ENCODE measurements at regions of chr22 and their contacts with region 1.

Region 1: DNA sequence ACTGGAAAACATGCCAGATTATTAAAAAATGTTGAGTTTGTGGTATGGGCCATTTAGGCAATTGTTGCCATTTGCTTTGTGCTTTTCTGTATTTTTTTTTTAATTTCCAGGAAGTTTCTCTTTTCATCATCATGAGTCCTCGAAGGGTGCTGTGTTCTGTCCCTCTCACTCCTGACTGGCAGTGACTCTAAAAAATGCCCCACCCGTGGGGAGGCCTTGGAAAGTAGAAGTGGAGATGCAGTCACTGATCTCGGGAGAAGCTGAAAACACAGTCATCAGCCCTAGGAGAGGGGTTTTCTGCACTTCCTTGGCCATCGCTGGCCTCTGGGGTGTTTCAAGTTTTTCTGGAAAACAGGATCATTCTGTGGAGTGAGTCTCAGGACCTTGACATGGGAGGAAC is 98.5 kb upstream of the GRK3 start:
- DNase-seq: no peak
- H3K4me3 ChIP-seq: no peak overlapping the region
- H3K4me3 Mint-ChIP-seq: no peak overlapping the region
- H3K27ac Mint-ChIP-seq: no peak overlapping the region
- H3K4me1 ChIP-seq: no peaks in the 10 kb centered on the region
- H3K4me1 Mint-ChIP-seq: no peaks in the 10 kb centered on the region
- H3K27me3 ChIP-seq: no peaks in the 10 kb centered on the region
- H3K27me3 Mint-ChIP-seq: no peaks in the 10 kb centered on the region
- CTCF ChIP-seq: no peak

Region 2: GRCh38 chr22:25630447-25630846 is 164.5 kb after region 1 on chr22:
- CTCF ChIA-PET with region 1: no interaction called
- POLR2A ChIA-PET with region 1: no interaction called
- intact Hi-C with region 1: no loop called
- DNase-seq: no peak
- H3K4me3 ChIP-seq: no peak overlapping the region
- H3K4me3 Mint-ChIP-seq: no peak overlapping the region
- H3K27ac Mint-ChIP-seq: no peak overlapping the region
- H3K4me1 ChIP-seq: no peaks in the 10 kb centered on the region
- H3K4me1 Mint-ChIP-seq: peaks cover 6% of the 10 kb centered on the region
- H3K27me3 ChIP-seq: no peaks in the 10 kb centered on the region
- H3K27me3 Mint-ChIP-seq: no peaks in the 10 kb centered on the region
- CTCF ChIP-seq: no peak

Region 3: DNA sequence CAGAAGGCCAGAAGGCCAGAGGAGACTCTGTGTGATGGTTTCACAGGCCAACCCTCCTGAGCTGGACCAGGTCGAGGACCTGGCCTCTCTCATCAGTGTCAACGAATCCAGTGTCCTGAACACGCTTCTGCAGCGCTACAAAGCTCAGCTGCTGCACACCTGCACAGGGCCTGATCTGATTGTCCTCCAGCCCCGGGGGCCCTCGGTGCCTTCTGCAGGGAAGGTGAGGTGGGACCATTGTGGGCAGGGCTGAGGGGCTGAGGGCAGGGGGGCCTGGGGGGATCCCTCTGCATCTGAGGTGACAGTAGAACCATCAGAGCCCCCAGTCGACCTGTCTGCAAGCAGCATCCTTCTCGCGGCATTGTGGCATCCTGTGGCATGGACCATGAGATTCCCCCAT is 306.3 kb after region 1 on chr22:
- CTCF ChIA-PET with region 1: interaction called, 18 read pairs
- POLR2A ChIA-PET with region 1: no interaction called
- intact Hi-C with region 1: loop called (anchors 1 kb)
- DNase-seq: no peak
- H3K4me3 ChIP-seq: no peak overlapping the region
- H3K4me3 Mint-ChIP-seq: no peak overlapping the region
- H3K27ac Mint-ChIP-seq: no peak overlapping the region
- H3K4me1 ChIP-seq: no peaks in the 10 kb centered on the region
- H3K4me1 Mint-ChIP-seq: peaks cover 4% of the 10 kb centered on the region
- H3K27me3 ChIP-seq: no peaks in the 10 kb centered on the region
- H3K27me3 Mint-ChIP-seq: peaks cover 3% of the 10 kb centered on the region
- CTCF ChIP-seq: no peak